Activated CD4-positive, alpha-beta T cell treated with anti-CD3 and anti-CD28 coated beads, Interleukin-2, amount 10 ng/mL, durations not matched to agents 24 days and 14 days (primary cell): ENCODE measurements at regions of chr2 and their contacts with region 1.

Region 1: DNA sequence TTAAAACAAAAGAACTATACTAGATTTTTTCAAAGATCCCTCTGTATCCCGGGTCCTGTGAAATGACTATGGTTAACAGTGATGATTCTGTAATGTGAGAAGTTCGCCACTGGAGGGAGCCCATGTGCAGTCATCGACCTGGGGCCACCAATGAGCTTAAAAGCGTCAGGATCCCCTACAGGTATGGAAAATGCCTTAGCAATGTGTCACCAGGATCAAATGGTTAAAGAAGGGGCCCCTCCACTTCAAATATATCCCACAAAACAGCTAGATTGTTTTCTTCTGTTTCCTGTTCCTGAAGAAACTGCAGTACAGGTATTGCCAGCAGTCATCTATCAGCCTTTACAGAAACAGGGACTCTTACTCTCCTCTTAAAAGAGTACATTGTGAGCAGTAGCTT is 15.3 kb downstream of the CHRNA1 start:
- DNase-seq: peak; percentile 92
- H3K4me3 Mint-ChIP-seq: no peak overlapping the region
- H3K27ac Mint-ChIP-seq: peak overlapping the region; percentile 49
- H3K4me1 Mint-ChIP-seq: peaks cover 31% of the 10 kb centered on the region
- H3K27me3 Mint-ChIP-seq: peaks cover 16% of the 10 kb centered on the region

Region 2: GRCh38 chr2:174697255-174697654 is 51.7 kb before region 1 on chr2:
- intact Hi-C with region 1: loop called (anchors 1 kb)
- DNase-seq: peak; percentile 89
- H3K4me3 Mint-ChIP-seq: no peak overlapping the region
- H3K27ac Mint-ChIP-seq: no peak overlapping the region
- H3K4me1 Mint-ChIP-seq: peaks cover 6% of the 10 kb centered on the region
- H3K27me3 Mint-ChIP-seq: peaks cover 35% of the 10 kb centered on the region

Region 3: DNA sequence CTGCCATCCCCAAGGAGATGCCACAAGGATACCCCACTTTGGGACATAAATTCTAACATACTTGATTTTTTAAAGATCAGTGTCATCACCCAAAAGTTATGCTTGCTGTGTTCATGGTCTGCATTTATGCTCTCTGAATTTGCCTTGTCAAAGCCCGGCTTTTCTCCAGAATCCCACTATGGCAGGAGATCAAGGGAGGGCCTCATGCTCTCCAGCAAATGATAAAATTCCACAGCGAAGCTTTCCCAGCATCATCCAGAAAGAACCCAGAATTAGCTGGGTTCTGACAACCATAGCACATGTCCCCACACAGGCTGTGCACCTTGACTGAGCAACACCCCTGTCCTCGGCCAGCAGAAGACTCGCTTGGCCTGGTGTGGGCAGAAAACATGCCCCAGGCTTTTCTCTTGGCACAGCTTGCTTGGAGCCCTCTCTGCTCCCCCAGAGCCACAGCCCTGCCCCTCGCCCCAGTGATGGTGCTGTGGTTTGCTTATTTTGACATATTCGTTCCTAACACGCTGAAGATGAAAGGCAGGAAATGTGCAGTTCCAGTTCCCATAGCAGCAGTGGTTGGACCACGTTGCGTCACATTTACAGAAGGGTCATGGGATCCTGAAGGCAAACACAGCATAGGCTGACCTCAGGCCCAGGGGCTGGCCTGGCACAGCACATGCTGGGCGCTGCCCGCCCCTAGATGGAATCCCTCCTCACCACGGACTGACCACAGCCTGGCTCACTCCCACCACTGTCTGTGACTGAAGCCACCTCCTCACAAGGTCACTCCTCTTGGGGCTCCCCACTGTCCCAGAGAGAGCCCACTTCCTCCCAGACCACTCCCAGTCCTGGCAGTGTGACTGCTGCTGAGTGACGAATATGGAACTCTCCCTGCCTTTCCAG is 29.4 kb after region 1 on chr2:
- intact Hi-C with region 1: loop called (anchors 1 kb)
- DNase-seq: peak; percentile 95
- H3K4me3 Mint-ChIP-seq: peak overlapping the region; percentile 70
- H3K27ac Mint-ChIP-seq: peak overlapping the region; percentile 95
- H3K4me1 Mint-ChIP-seq: peaks cover 47% of the 10 kb centered on the region
- H3K27me3 Mint-ChIP-seq: no peaks in the 10 kb centered on the region

Region 4: GRCh38 chr2:174835797-174836255 is 86.9 kb after region 1 on chr2:
- intact Hi-C with region 1: loop called (anchors 1 kb)
- DNase-seq: peak; percentile 60
- H3K4me3 Mint-ChIP-seq: peak overlapping the region; percentile 72
- H3K27ac Mint-ChIP-seq: peak overlapping the region; percentile 99
- H3K4me1 Mint-ChIP-seq: peaks cover 30% of the 10 kb centered on the region
- H3K27me3 Mint-ChIP-seq: no peaks in the 10 kb centered on the region

Region 5: DNA sequence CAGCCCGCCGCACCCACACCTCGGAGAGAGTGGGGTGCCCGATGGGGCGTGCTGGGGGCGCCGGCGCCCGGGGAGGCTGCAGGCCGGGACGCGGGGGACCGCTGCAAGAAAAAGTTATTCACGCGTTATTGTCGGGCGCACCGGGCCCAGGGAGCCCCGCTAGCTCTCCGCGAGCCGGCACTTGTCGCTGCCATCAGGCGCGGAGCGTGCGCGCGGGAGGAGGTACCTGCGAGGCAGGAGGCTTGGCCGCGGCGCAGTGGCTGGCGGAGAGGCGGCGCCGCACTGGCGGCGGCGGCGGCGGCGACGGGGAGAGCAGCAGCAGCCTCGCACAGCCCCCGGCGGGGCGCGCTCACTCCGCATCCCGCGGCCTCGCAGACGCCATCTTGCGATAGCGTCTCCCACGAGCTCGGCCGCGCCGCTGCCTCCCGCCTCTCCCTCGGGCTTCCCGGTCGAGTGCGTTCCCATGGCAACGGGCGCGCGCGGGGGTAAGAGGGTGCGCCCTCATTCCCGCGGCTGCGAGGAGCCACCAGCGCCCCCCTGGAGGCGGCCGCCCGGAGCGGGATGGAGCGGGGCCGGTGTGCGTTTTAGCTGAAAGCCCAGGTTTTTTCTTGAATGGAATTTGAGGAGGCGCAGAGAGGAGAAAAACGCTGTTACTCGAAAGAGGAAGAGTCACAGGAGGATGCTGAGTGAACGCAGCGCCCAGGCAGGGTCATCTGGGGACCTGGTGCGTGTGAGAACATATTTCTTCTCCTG is 256.2 kb after region 1 on chr2 and contains the start of gene CHN1:
- intact Hi-C with region 1: loop called (anchors 1 kb)
- DNase-seq: peak; percentile 87
- H3K4me3 Mint-ChIP-seq: peak within 1 kb of the TSS; percentile 84
- H3K27ac Mint-ChIP-seq: no peak within 1 kb of the TSS
- H3K4me1 Mint-ChIP-seq: peaks cover 3% of the 10 kb centered on the region
- H3K27me3 Mint-ChIP-seq: peaks cover 64% of the 10 kb centered on the region
- total RNA-seq, gene CHN1: 3.1 and 5.1 TPM in 2 replicates

Region 6: DNA sequence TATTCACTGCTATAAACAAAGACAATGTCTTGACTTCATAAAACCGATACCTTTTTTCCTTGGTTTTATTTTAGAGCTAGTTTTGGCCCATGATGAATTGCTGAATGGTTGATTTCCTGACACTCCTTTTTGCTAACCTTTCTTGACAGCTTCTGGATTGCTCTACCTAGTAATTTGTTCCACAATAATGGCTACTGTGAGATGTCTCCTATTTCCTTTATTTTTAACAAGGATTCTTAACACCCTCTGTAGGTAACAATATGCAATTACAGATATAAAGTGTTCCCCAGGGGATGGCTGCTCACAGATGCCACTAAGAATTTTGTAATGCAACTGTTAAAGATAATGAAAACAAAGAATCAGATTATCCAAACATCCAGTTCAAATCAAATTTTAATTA is 533.3 kb after region 1 on chr2:
- intact Hi-C with region 1: loop called (anchors 5 kb)
- DNase-seq: no peak
- H3K4me3 Mint-ChIP-seq: no peak overlapping the region
- H3K27ac Mint-ChIP-seq: no peak overlapping the region
- H3K4me1 Mint-ChIP-seq: peaks cover 2% of the 10 kb centered on the region
- H3K27me3 Mint-ChIP-seq: peaks cover 31% of the 10 kb centered on the region